Sigmoid colon (tissue), 7 donors: ENCODE measurements at regions of chr19 and their contacts with region 1.

Region 1: GRCh38 chr19:49676690-49677231 is 310 bp upstream of the PRMT1 start:
- DNase-seq: peak; percentile 100
- H3K4me3 ChIP-seq: peak overlapping the region; percentile 71 to 96 (median 94)
- H3K27ac ChIP-seq: peak overlapping the region; percentile 92 to 95 (median 94)
- H3K4me1 ChIP-seq: peaks cover 0 to 54% (median 51%) of the 10 kb centered on the region in 4 donors
- H3K27me3 ChIP-seq: no peaks in the 10 kb centered on the region
- CTCF ChIP-seq: no peak
- EP300 ChIP-seq: no peak
- POLR2A ChIP-seq: no peak

Region 2: DNA sequence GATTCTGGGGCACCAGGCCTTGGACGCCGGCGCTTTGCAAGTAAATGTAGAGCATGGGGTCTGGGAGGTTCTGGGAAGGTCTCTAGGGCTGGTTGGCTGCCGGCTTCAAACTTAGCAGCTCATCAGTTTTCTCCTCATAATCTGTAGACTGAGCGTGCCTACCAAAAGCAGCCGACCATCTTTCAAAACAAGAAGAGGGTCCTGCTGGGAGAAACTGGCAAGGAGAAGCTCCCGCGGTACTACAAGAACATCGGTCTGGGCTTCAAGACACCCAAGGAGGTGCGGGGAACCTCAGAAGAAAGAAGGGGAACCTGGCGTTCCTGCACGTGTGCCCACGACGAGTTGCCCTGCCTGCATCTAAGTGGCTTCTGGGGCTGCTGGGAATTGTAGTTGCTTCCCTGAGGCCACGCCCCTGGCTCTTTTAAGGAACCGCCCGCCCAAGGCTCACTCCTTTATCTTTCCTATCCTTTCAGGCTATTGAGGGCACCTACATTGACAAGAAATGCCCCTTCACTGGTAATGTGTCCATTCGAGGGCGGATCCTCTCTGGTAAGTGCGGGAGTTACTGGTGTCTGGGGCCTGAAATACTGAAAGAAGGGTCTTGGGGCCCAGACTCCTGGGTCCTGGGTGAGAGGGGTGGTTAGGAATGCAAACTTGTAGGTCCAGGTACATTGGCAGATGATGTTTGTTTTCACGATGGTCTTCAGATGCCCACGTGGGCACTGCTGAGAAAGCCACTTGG is 179.5 kb before region 1 on chr19:
- intact Hi-C with region 1: loop called (anchors 5 kb)
- DNase-seq: peak; percentile 81
- H3K4me3 ChIP-seq: peak overlapping the region; percentile 70 to 95 (median 85)
- H3K27ac ChIP-seq: peak overlapping the region; percentile 88 to 96 (median 94)
- H3K4me1 ChIP-seq: peaks cover 0 to 46% (median 34%) of the 10 kb centered on the region in 4 donors
- H3K27me3 ChIP-seq: no peaks in the 10 kb centered on the region
- CTCF ChIP-seq: no peak
- EP300 ChIP-seq: no peak
- POLR2A ChIP-seq: no peak

Region 3: DNA sequence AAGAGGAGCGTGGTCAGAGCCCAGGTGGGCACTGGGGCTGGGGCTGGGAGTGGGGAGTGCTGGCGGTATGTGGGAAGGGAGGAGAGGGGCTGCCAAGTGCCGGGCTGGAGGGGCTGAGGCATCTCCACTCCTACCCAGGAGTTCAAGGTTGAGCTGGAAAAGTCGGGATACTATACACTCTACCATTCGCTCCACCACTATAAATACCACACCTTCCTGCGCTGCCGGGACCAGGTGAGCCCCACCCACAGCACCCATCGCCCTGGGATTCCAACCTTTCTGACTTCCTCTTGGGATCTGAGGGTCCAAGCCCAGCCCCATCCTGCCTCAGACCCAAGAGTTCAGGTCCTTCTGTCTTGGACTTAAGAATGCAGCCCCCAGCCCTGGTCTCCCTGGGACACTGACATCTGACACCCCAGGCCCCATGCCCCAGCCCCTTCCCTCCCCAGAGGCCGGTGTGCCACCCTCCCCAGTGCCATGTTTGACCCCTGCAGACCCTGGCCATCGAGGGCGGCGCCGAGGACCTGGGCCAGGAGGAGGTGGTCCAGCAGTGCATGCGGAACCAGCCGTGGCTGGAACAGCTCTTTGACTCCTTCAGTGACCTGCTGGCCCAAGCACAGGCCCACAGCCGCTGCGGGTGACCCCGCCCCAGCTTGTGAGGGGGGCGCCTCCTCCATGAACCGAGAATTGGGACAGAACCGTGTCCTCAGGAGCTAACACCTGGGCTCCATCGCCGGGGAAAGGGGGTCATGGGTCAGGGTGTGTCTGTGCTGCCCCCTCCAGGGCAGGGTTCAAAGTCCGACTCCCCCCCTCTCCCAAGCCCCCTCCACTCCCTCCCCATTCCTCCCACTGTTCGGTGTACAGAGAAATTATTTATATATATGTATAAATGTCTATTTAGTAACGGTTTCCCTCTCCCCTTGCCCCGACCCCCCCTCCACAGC is 51.5 kb before region 1 on chr19:
- intact Hi-C with region 1: no loop called
- DNase-seq: no peak
- H3K4me3 ChIP-seq: no peak overlapping the region
- H3K27ac ChIP-seq: no peak overlapping the region
- H3K4me1 ChIP-seq: peaks cover 0 to 4% (median 1%) of the 10 kb centered on the region in 4 donors
- H3K27me3 ChIP-seq: no peaks in the 10 kb centered on the region
- CTCF ChIP-seq: no peak
- EP300 ChIP-seq: no peak
- POLR2A ChIP-seq: no peak